Testis (tissue), 5 donors: ENCODE measurements at regions of chr19 and their contacts with region 1.

Region 1: GRCh38 chr19:13880059-13881043 is 3.4 kb downstream of the NANOS3 start:
- DNase-seq: peak; percentile 98
- H3K4me3 ChIP-seq: no peak overlapping the region
- H3K27ac ChIP-seq: peak overlapping the region; percentile 76 to 87
- H3K4me1 ChIP-seq: peaks cover 50% of the 10 kb centered on the region
- H3K27me3 ChIP-seq: no peaks in the 10 kb centered on the region
- CTCF ChIP-seq: peak; percentile 95 to 99 (median 99)
- POLR2A ChIP-seq: no peak

Region 2: DNA sequence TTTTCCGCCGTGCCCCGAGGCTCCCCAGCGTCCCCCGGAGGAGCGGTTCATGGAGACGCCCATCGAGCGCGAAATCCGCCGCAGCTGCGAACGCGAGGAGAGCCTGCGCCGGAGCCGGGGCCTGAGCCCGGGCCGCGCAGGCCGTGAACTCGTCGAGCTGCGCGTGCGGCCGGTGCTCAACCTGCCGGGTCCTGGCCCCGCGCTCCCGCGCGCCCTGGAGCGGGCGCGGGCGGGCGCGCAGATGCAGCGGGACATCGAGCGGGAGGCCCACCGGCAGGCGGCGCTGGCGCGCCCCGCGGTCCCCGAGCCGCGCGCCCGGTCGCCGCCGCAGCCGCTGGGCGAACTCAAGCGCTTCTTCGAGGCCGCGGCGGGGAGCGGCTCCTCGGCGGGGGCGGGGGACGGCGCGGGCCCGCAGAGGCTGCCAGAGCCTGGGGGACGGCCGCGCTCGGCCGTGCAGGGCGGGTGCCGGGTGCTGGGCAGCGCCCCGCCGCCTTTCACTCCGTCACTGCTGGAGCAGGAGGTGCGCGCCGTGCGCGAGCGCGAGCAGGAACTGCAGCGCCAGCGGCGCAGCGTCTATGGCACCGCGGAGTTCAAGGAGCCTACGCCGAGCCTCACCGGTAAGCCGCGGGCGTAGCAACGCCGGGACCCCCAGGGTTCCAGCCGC is 193.0 kb after region 1 on chr19:
- intact Hi-C with region 1: loop called (anchors 10 kb)
- DNase-seq: peak; percentile 80
- H3K4me3 ChIP-seq: peak overlapping the region; percentile 54 to 60
- H3K27ac ChIP-seq: peak overlapping the region; percentile 85 to 88
- H3K4me1 ChIP-seq: peaks cover 15% of the 10 kb centered on the region
- H3K27me3 ChIP-seq: no peaks in the 10 kb centered on the region
- CTCF ChIP-seq: peak; percentile 27 to 92 (median 52)
- POLR2A ChIP-seq: no peak